Right cardiac atrium (tissue), 5 donors: ENCODE measurements at regions of chr5 and their contacts with region 1.

Region 1: DNA sequence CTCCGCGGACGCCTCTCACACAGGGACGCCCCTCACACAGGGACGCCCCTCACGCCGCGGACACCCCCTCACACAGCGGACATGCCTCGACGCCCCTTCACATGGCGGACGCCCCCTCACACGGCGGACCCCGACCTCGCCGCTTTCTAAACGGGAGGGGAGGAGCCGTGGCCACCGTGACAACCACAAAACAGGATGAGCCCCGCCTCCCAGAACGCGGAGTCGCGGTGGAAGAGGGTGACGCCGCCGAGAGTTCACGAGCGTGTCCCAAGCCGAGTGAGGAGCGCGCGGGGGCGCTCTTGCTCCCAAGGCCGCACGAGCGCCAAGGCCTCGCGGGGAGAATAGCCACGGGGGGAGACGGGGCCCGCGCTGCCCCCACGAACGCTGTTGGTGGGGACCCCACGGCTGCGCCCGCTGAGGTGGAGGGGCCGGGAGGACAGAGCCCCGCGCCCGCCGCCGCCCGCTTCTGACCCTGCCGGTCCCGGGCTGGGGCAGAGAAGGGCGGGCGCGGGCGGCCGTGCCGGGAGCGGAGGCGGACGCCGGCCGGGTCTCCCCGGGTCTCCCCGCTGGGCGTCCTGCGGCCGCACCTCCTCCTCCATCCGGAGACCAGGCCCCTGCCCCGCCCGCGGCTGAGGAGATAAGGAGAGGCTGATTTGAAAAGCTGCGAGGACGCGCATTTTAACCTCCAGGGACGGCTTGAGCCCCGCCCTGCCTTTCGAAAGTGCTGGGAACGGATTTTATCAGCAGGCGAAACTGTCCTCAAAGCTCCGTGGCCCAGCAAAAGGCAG is 3.9 kb upstream of the NKD2 start:
- DNase-seq: peak; percentile 88 to 96 (median 95)
- ATAC-seq: peak; percentile 81 to 82
- H3K4me3 ChIP-seq: peak overlapping the region; percentile 54
- H3K27ac ChIP-seq: peak overlapping the region; percentile 16
- H3K4me1 ChIP-seq: peaks cover 3% of the 10 kb centered on the region
- H3K27me3 ChIP-seq: no peaks in the 10 kb centered on the region

Region 2: DNA sequence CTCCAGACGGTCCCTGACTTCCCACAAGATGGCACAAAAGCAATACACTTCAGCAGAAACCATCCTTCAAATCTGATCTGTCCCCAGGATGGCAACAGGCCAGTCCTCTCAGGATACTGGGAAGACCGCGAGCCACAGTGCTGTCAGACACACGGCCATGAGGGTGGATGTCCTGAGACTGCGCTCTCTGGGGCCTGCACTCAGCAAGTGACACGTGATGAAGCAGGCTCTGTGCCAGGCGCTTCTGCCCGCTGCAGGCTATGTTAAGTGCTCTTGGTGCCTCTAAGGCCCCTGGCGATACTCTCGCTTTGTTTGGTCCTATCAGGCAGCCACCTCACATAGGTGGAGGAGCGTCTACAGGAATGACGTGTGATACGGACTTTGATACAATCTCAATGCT is 119.1 kb before region 1 on chr5:
- intact Hi-C with region 1: no loop called
- DNase-seq: peak; percentile 72 to 90 (median 90)
- ATAC-seq: peak; percentile 76 to 90
- H3K4me3 ChIP-seq: no peak overlapping the region
- H3K27ac ChIP-seq: no peak overlapping the region
- H3K4me1 ChIP-seq: no peaks in the 10 kb centered on the region
- H3K27me3 ChIP-seq: no peaks in the 10 kb centered on the region

Region 3: GRCh38 chr5:1125030-1125357 is 120.3 kb after region 1 on chr5:
- intact Hi-C with region 1: loop called in 2 of 4 experiments (anchors 5 to 10 kb)
- DNase-seq: peak; percentile 79 to 92 (median 91)
- ATAC-seq: peak; percentile 74 to 86
- H3K4me3 ChIP-seq: no peak overlapping the region
- H3K27ac ChIP-seq: peak overlapping the region; percentile 50
- H3K4me1 ChIP-seq: peaks cover 11% of the 10 kb centered on the region
- H3K27me3 ChIP-seq: no peaks in the 10 kb centered on the region

Region 4: GRCh38 chr5:1134478-1134877 is 129.8 kb after region 1 on chr5:
- intact Hi-C with region 1: loop called in 2 of 4 experiments (anchors 5 to 10 kb)
- DNase-seq: peak in 2 of 3 donors; percentile 50 to 61
- ATAC-seq: no peak
- H3K4me3 ChIP-seq: no peak overlapping the region
- H3K27ac ChIP-seq: no peak overlapping the region
- H3K4me1 ChIP-seq: peaks cover 4% of the 10 kb centered on the region
- H3K27me3 ChIP-seq: no peaks in the 10 kb centered on the region

Region 5: GRCh38 chr5:1140171-1140817 is 135.6 kb after region 1 on chr5:
- intact Hi-C with region 1: loop called in 3 of 4 experiments (anchors 5 to 10 kb)
- DNase-seq: peak; percentile 79 to 93 (median 92)
- ATAC-seq: peak; percentile 78 to 79
- H3K4me3 ChIP-seq: no peak overlapping the region
- H3K27ac ChIP-seq: no peak overlapping the region
- H3K4me1 ChIP-seq: no peaks in the 10 kb centered on the region
- H3K27me3 ChIP-seq: no peaks in the 10 kb centered on the region